Activated T-helper 1 cell treated with anti-CD3 and anti-CD28 coated beads, Interleukin-12 subunit alpha, Interleukin-12 subunit beta, Interleukin-2, Interleukin-4 antibody, amounts not matched to agents 30 ng/mL and 10 ng/mL and 1 ng/mL, durations not matched to agents 14 hours and 24 hours and 36 hours (primary cell): ENCODE measurements at regions of chr4 and their contacts with region 1.

Region 1: DNA sequence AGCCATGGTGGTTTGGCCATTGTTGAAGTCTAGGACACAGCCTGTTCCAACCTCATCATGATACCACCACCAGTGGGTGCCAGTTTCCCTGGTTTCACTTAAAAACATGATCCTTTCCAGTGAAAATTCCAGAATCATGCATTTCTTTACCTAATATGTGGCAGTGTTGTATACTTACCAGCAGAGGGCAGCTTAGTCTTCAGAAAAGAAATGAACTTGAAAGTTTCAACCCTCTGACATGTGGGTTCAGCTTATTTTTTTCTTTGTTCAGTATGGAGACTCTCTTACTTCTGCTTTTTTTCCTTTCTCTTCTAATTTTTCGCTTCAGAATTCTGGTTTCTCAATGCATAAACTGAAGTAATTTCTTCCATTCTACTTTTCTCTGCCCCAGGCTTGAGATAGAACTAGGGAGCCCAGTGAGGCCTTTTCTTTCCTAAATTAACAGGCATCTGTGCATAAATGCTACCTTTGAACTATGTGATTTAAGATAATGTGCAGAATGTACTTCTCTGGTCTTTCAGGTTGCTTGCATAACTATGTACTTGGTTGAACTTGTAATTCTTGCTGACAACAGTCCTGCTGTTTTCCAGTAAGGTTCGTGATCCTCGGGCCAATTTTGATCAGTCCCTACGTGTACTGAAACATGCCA is 10.7 kb downstream of the LIAS start:
- DNase-seq: no peak
- H3K4me3 Mint-ChIP-seq: no peak overlapping the region
- H3K27ac Mint-ChIP-seq: no peak overlapping the region
- H3K4me1 Mint-ChIP-seq: peaks cover 8% of the 10 kb centered on the region
- H3K27me3 Mint-ChIP-seq: no peaks in the 10 kb centered on the region

Region 2: DNA sequence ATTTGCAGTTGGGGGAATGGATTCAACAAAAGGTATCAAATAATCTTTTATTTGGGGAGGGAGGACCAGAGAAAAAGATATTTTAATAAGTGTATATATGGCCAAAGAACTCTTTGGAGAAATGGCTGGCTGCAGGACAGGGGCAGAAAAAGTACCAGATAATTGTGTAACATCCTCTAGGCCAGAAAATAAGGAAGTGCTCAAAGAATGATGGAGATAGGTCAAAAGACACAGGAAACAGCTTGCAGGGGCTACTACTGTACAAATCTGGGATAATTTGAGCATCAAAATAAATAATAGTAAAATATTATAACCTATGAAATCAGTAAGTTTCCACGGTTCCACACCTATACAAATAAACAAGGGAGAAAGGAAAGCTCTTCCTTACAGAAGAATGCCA is 372.7 kb before region 1 on chr4:
- intact Hi-C with region 1: no loop called
- DNase-seq: no peak
- H3K4me3 Mint-ChIP-seq: no peak overlapping the region
- H3K27ac Mint-ChIP-seq: no peak overlapping the region
- H3K4me1 Mint-ChIP-seq: peaks cover 11% of the 10 kb centered on the region
- H3K27me3 Mint-ChIP-seq: no peaks in the 10 kb centered on the region

Region 3: GRCh38 chr4:39638354-39639240 is 169.0 kb after region 1 on chr4 and contains the start of gene SMIM14:
- intact Hi-C with region 1: loop called (anchors 2 kb)
- DNase-seq: peak; percentile 89
- H3K4me3 Mint-ChIP-seq: peak within 1 kb of the TSS; percentile 87
- H3K27ac Mint-ChIP-seq: peak within 1 kb of the TSS; percentile 83
- H3K4me1 Mint-ChIP-seq: peaks cover 22% of the 10 kb centered on the region
- H3K27me3 Mint-ChIP-seq: peaks cover 24% of the 10 kb centered on the region
- total RNA-seq, gene SMIM14: 0.76 and 1.6 TPM in 2 replicates

Region 4: GRCh38 chr4:39658756-39659155 is 189.2 kb after region 1 on chr4:
- intact Hi-C with region 1: loop called (anchors 1 kb)
- DNase-seq: no peak
- H3K4me3 Mint-ChIP-seq: no peak overlapping the region
- H3K27ac Mint-ChIP-seq: no peak overlapping the region
- H3K4me1 Mint-ChIP-seq: peaks cover 9% of the 10 kb centered on the region
- H3K27me3 Mint-ChIP-seq: no peaks in the 10 kb centered on the region

Region 5: DNA sequence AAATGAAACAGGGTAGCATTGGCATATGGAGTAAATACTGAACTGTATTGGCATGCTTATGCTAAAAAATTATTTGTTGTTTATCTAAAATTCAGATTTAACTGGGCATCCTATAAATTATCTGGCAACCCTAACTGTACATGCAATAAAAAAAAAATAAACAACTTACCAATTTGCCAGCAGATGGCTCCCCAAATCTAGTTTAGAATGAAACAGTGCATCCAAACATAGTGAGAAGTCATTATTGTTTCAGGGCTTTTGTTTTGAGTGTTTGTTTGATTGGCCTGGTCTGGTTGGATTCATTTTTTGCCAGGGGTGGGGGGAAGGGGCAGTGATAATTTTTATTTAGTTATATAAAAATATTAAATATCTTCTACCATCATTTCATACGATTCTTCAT is 1267.4 kb after region 1 on chr4:
- intact Hi-C with region 1: loop called (anchors 10 kb)
- DNase-seq: no peak
- H3K4me3 Mint-ChIP-seq: no peak overlapping the region
- H3K27ac Mint-ChIP-seq: no peak overlapping the region
- H3K4me1 Mint-ChIP-seq: peaks cover 22% of the 10 kb centered on the region
- H3K27me3 Mint-ChIP-seq: peaks cover 10% of the 10 kb centered on the region